Tibial artery (tissue), 4 donors: ENCODE measurements at regions of chr2 and their contacts with region 1.

Region 1: DNA sequence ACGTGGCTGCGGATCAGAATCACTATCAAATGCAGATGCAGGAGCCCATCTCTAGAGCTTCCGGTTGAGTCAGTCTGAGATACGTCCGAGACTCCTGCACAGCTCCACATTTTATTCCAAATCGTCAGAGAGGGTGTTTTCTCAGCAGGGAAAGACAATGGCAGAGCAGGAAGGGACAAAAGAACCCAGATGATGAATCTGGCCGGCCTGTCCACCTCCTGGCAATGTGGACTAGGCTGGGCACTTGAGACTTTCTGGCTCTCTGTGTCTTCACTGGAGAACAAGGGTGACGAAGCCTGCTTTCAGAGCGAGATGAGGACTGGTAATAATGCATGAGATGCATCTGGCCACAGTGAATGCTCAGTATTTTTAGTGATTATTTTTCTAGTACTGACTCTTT is 255.9 kb upstream of the MYT1L start:
- DNase-seq: no peak
- H3K4me3 ChIP-seq: no peak overlapping the region
- H3K27ac ChIP-seq: no peak overlapping the region
- H3K4me1 ChIP-seq: no peaks in the 10 kb centered on the region
- H3K27me3 ChIP-seq: no peaks in the 10 kb centered on the region
- CTCF ChIP-seq: no peak

Region 2: DNA sequence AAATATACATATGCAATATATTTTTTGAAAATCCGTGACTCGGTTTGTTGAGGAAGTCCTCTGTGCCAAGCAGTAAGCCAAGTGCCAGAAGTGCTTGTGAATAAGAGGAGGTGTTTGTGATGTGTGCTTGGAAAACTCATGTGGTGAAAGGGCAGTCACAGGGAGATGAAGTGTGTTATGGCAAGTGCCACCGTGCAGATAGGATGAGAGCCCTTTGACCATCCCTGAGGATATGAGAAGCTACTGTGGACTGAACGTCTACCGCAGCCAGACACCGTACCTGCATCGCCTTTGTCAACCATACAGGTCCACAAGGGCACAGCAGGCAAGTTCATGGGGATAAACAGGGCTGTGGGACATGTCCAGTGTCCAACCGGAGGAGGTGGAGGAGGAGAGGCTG is 33.1 kb after region 1 on chr2:
- intact Hi-C with region 1: loop called (anchors 1 kb)
- DNase-seq: no peak
- H3K4me3 ChIP-seq: no peak overlapping the region
- H3K27ac ChIP-seq: no peak overlapping the region
- H3K4me1 ChIP-seq: no peaks in the 10 kb centered on the region
- H3K27me3 ChIP-seq: no peaks in the 10 kb centered on the region
- CTCF ChIP-seq: no peak

Region 3: DNA sequence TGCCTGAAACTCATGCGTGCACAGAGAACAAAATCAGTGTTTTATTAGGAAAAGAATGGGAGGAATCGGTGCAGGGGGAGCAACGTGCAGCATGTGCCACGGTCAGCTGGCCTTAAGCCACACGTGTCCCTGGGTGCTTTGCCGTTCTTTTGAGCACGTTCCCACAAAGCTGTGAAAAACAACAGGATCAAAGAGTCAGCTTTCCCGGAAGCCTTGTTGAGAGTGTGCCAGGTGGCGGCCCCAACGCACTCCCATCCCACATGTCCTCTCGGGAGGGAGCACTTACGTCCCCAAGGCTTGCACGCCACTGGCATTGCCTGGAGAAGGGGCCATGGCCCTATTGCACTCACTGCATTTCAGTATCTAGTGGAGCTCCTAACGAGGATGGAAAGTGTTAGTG is 279.5 kb after region 1 on chr2:
- intact Hi-C with region 1: no loop called
- DNase-seq: no peak
- H3K4me3 ChIP-seq: no peak overlapping the region
- H3K27ac ChIP-seq: no peak overlapping the region
- H3K4me1 ChIP-seq: no peaks in the 10 kb centered on the region
- H3K27me3 ChIP-seq: no peaks in the 10 kb centered on the region
- CTCF ChIP-seq: no peak